Mucosa of descending colon (tissue), 3 donors: ENCODE measurements at regions of chr20 and their contacts with region 1.

Region 1: DNA sequence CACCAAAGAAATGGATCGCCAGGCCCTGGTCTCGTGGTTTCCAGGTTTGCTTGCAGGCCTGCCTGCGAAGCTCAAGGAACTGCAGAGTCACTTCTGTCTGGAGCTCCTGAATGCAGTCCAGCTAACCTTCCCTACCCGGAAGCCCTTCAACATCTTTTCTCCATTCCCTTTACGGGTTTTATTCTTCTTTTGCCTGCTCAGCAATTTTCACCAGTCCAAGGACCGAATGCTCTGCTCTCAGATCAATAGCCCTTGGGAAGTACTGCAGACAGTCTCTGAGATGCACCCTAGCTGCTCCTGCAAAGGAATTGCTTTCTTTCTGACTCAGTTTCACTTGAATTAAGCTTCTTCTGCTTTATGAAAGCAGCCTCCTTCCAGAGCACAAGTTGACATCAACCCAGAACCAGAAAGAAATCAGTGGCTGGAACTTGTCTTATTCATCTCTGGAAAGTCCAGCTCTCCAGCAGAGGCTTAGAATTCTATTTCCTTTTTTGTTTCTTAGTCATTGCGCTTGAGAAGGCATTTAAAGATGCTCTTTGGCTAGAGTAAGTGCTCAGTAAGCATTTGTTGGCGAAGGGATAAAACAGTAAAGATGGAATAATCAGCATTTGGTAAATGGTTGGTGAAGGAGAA is 18.7 kb upstream of the YWHAB start:
- DNase-seq: no peak
- ATAC-seq: no peak
- H3K4me3 ChIP-seq: no peak overlapping the region
- H3K4me1 ChIP-seq: no peaks in the 10 kb centered on the region
- CTCF ChIP-seq: no peak

Region 2: GRCh38 chr20:44747166-44748004 is 119.4 kb before region 1 on chr20:
- intact Hi-C with region 1: loop called (anchors 2 to 5 kb)
- DNase-seq: peak in 2 of 3 donors; percentile 75 to 92
- ATAC-seq: peak; percentile 82
- H3K4me3 ChIP-seq: no peak overlapping the region
- H3K4me1 ChIP-seq: peaks cover 8% of the 10 kb centered on the region
- CTCF ChIP-seq: peak; percentile 59